ENCODE measurements at regions of chr3 and their contacts with region 1.

Region 1: DNA sequence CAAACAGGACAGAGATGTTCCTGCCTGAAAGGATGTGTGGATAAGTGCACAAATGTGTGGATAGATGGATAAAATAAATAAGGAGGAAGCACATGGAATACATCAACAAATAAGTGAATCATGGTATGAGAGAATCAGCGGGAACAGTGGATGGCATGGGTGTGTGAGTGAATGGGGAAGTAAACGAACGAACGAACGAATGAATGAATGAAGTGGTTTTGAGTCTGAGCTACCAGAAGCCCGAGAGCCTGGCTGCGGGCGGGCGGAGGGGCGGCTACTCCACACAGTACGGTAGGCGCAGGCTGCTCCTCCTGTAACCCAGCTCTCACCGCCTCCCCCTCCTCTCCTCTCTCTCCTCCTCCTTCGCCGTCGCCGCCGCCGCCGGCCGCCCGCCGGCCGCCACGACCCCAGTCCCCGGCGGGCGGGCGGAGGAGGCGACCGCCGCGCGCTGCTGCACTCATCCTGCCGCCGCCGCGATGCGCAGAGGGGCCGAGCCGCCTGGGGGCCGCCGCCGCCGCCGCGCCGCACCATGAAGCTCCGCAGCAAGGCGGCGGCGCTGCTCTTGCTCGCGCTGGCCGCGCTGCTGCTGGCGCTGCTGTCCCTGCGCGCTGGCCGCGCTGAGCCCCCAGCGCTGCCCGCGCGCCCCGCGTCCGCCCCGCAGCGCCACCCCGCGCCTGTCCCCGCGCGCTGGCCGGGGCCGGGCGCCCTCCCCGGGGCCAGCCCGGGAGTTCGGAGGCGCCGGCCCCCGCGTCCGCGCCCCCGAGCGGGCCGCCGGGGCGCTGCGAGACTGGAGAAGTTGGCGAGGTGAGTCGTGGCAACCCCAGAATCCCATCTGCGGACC is at the start of gene GXYLT2:
- DNase-seq: peak; percentile 61 to 97 (median 78)

Region 2: GRCh38 chr3:72847751-72848702 is 39.9 kb before region 1 on chr3 and contains the start of gene SHQ1:
- intact Hi-C with region 1: loop called (anchors 5 kb)
- DNase-seq: peak; percentile 86 to 99 (median 94)